Posterior vena cava (tissue), 2 donors: ENCODE measurements at regions of chr1 and their contacts with region 1.

Region 1: GRCh38 chr1:39833621-39834385 is 45.1 kb upstream of the BMP8B start:
- DNase-seq: no peak

Region 2: GRCh38 chr1:39683591-39684312 is 150.1 kb before region 1 on chr1:
- intact Hi-C with region 1: loop called in 1 of 2 experiments (anchors 2 kb)
- DNase-seq: peak; percentile 82

Region 3: GRCh38 chr1:39933956-39934941 is 100.4 kb after region 1 on chr1:
- intact Hi-C with region 1: no loop called
- DNase-seq: peak; percentile 94